ENCODE measurements at regions of chr11 and their contacts with region 1.

Region 1: GRCh38 chr11:2077061-2077802 is 62.0 kb downstream of the IGF2 start:
- DNase-seq: peak; percentile 37 to 90
- H3K4me3 ChIP-seq: 0 out of 2 replicates have a peak overlapping the region, but pooled peaks have one; percentile 19
- H3K27ac ChIP-seq: peak overlapping the region; percentile 88
- H3K4me1 ChIP-seq: peaks cover 31% of the 10 kb centered on the region
- H3K27me3 ChIP-seq: no peaks in the 10 kb centered on the region
- CTCF ChIP-seq: no peak

Region 2: GRCh38 chr11:2143799-2144543 is 66.7 kb after region 1 on chr11:
- CTCF ChIA-PET with region 1: no interaction called
- POLR2A ChIA-PET with region 1: interaction called, 19 read pairs
- intact Hi-C with region 1: no loop called
- DNase-seq: no peak
- H3K4me3 ChIP-seq: no peak overlapping the region
- H3K27ac ChIP-seq: no peak overlapping the region
- H3K4me1 ChIP-seq: peaks cover 13% of the 10 kb centered on the region
- H3K27me3 ChIP-seq: peaks cover 15% of the 10 kb centered on the region; the same call in 1 of the 2 replicates
- CTCF ChIP-seq: no peak

Region 3: GRCh38 chr11:2248762-2249161 is 171.5 kb after region 1 on chr11:
- CTCF ChIA-PET with region 1: no interaction called
- POLR2A ChIA-PET with region 1: no interaction called
- intact Hi-C with region 1: no loop called
- DNase-seq: no peak
- H3K4me3 ChIP-seq: no peak overlapping the region
- H3K27ac ChIP-seq: no peak overlapping the region
- H3K4me1 ChIP-seq: no peaks in the 10 kb centered on the region; the same call in 1 of the 2 replicates
- H3K27me3 ChIP-seq: no peaks in the 10 kb centered on the region
- CTCF ChIP-seq: no peak

Measured in PC-9 (cell line).